ENCODE measurements at regions of chr15 and their contacts with region 1.

Region 1: GRCh38 chr15:101501703-101502373 is 12.3 kb upstream of the PCSK6 start:
- DNase-seq: no peak
- ATAC-seq: peak; percentile 43

Region 2: GRCh38 chr15:101167753-101168463 is 333.9 kb before region 1 on chr15:
- intact Hi-C with region 1: no loop called
- DNase-seq: peak; percentile 85
- ATAC-seq: peak; percentile 75

Region 3: GRCh38 chr15:101303408-101303807 is 198.4 kb before region 1 on chr15:
- intact Hi-C with region 1: loop called (anchors 5 kb)
- DNase-seq: no peak
- ATAC-seq: no peak

Region 4: DNA sequence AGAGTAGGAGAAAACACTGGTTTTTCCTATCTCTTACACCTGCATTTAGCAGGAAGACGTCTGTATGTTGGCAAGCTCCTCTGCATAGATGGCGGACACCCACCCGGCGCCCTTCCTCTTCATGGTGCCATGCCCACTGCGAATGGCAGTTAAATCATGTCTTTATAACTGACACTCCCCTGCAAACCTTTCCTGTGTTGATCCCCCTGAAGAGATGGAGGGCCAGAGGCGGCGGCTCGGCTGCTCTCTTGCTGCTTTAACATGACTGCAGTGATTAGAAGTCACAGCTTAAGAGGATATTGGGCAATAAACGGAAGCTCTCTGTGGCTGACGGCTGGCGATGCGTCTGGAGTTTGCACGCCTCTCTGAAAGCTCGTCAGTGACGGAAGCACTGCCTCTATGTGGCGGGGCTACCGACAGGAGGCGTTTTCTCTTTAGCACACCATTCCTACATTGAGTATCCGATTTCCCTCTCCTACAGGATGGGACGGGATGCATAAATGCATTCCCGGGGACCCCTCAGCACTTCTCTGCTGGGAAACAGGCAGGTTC is 181.3 kb before region 1 on chr15:
- intact Hi-C with region 1: no loop called
- DNase-seq: peak; percentile 83
- ATAC-seq: peak; percentile 30

Region 5: GRCh38 chr15:101358895-101359294 is 142.9 kb before region 1 on chr15:
- intact Hi-C with region 1: loop called (anchors 2 kb)
- DNase-seq: no peak
- ATAC-seq: peak; percentile 78

Region 6: GRCh38 chr15:101439920-101440319 is 61.9 kb before region 1 on chr15:
- intact Hi-C with region 1: loop called (anchors 5 kb)
- DNase-seq: no peak
- ATAC-seq: peak; percentile 58

Region 7: GRCh38 chr15:101578437-101578894 is 76.6 kb after region 1 on chr15:
- intact Hi-C with region 1: loop called (anchors 5 kb)
- DNase-seq: no peak
- ATAC-seq: peak; percentile 42

Region 8: DNA sequence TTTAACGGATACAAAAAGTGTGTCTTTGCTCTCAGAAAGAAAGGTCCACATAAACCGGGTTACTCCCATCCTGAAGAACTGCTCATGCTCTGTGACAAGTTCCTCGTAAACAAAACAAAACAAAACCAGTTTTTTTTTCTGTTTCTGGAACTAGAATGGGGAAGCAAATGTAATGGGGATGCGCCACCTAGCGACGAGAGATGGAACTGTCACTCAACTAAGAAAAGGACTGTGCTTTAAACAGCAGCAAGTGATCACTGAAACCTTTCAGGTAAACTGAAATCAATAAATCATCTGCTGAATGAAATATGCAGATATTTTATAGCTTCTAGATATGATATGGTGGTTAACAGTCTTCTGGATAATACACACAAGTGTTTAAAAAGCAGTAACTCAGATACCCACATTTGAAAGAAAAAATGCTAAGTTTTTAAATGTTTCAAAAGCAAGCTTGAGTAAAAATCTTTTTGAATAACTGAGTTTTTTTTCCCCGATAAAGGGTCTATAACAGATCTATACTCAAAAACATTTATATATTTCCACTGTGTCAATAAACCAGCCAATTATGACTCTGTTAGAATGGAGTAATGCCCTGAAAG is 139.4 kb after region 1 on chr15:
- intact Hi-C with region 1: loop called (anchors 2 kb)
- DNase-seq: peak; percentile 80
- ATAC-seq: peak; percentile 66

Measured in Right ventricle myocardium inferior (tissue), 1 donor.